A673 (cell line): ENCODE measurements at regions of chr6 and their contacts with region 1.

Region 1: DNA sequence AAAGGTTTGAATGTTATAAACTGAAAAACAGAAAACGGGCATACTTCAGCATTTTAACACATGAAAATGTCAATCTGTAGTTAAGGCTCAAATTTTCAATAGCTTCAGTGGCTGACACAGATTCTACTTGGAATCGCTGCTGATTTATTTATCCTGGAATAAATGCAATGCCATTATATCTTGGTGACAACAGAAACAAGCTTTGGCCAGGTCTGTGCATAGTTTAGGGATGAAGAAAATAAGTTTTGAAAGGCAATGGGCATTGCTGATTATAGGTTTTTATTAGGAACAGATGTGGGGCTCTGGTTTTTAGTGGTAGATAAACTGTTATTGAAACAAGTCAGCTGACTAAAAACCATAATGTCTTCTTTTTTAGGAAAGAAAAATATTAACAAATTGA is 96.8 kb upstream of the SOX4 start:
- DNase-seq: no peak
- H3K4me3 ChIP-seq: no peak overlapping the region
- H3K27ac ChIP-seq: no peak overlapping the region
- H3K4me1 ChIP-seq: no peaks in the 10 kb centered on the region
- H3K27me3 ChIP-seq: no peaks in the 10 kb centered on the region
- CTCF ChIP-seq: no peak

Region 2: DNA sequence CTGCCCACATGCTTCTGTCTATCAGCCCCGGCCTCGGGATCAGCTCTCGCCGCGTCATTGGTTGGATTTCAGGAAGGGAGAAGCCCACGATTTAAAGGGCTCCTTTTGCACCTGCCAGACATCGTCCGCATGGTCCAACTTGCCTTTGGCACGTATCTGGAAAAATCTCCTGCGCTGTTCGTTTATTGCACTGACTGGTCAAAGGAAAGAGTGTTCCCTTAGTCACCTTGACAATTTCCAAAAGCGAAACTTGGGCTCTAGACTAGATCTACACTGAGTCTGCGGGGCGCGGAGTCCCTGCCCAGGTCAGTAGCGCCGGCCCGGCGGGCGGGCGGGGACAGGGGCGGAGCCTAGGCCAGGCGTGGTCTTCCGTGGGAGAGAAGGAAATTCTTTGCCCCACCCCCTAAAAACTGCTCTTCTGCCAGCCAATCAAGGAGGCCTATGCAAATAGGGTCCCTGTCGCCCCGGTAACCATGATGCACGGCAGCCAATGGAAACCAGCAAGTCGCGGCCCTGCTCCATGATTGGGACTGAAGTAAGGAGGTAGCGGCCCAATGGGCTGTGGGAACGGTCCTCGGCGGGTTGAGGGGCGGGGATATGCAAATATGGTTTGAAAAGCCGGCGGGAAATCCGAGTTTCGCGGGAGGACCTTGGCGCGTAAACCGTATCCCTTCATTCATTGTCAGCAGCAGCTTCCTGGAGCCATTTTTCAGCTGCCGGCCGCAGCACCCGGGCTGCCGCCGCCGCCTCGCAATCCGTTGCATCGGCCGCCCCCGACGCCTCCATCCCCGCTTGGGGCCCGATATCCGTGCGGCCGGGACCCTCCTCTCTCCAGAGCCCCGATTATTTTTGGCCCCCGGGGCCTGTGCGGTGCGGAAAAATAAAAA is 1095.3 kb before region 1 on chr6 and contains the start of gene E2F3:
- CTCF ChIA-PET with region 1: no interaction called
- POLR2A ChIA-PET with region 1: interaction called, 14 read pairs
- intact Hi-C with region 1: no loop called
- DNase-seq: peak; percentile 100
- H3K4me3 ChIP-seq: peak within 1 kb of the TSS; percentile 96
- H3K27ac ChIP-seq: peak within 1 kb of the TSS; percentile 96
- H3K4me1 ChIP-seq: no peaks in the 10 kb centered on the region
- H3K27me3 ChIP-seq: peaks cover 1% of the 10 kb centered on the region
- CTCF ChIP-seq: no peak
- total RNA-seq, gene E2F3: 41.3 and 42.4 TPM in 2 replicates

Region 3: DNA sequence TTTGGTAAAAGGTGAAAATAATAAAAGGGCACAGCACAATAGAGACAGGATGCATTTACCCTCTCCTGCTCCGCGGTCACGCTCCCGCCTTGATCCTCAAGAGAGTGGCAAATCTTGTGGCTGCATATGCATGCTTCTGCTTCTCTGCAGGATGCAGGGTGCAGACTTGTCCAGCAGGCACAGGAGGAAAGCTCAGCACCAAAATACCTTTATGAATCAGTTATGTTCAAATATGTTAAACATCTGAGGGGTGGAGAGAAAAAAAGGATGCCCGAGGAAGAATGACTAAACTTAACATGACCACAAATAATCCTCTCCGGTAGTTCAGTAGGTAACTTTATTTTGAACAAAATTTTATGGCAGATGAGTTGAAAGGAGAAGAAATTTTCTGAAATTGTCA is 269.2 kb before region 1 on chr6:
- CTCF ChIA-PET with region 1: no interaction called
- POLR2A ChIA-PET with region 1: no interaction called
- intact Hi-C with region 1: no loop called
- DNase-seq: no peak
- H3K4me3 ChIP-seq: no peak overlapping the region
- H3K27ac ChIP-seq: no peak overlapping the region
- H3K4me1 ChIP-seq: no peaks in the 10 kb centered on the region
- H3K27me3 ChIP-seq: no peaks in the 10 kb centered on the region
- CTCF ChIP-seq: no peak

Region 4: GRCh38 chr6:21511891-21512550 is 15.3 kb after region 1 on chr6:
- CTCF ChIA-PET with region 1: no interaction called
- POLR2A ChIA-PET with region 1: interaction called, 18 read pairs
- intact Hi-C with region 1: no loop called
- DNase-seq: no peak
- H3K4me3 ChIP-seq: no peak overlapping the region
- H3K27ac ChIP-seq: no peak overlapping the region
- H3K4me1 ChIP-seq: no peaks in the 10 kb centered on the region
- H3K27me3 ChIP-seq: no peaks in the 10 kb centered on the region
- CTCF ChIP-seq: no peak

Region 5: GRCh38 chr6:21868226-21868625 is 371.5 kb after region 1 on chr6:
- CTCF ChIA-PET with region 1: no interaction called
- POLR2A ChIA-PET with region 1: interaction called, 13 read pairs
- intact Hi-C with region 1: no loop called
- DNase-seq: no peak
- H3K4me3 ChIP-seq: no peak overlapping the region
- H3K27ac ChIP-seq: no peak overlapping the region
- H3K4me1 ChIP-seq: no peaks in the 10 kb centered on the region
- H3K27me3 ChIP-seq: no peaks in the 10 kb centered on the region
- CTCF ChIP-seq: no peak